ENCODE measurements at regions of chr19 and their contacts with region 1.

Region 1: DNA sequence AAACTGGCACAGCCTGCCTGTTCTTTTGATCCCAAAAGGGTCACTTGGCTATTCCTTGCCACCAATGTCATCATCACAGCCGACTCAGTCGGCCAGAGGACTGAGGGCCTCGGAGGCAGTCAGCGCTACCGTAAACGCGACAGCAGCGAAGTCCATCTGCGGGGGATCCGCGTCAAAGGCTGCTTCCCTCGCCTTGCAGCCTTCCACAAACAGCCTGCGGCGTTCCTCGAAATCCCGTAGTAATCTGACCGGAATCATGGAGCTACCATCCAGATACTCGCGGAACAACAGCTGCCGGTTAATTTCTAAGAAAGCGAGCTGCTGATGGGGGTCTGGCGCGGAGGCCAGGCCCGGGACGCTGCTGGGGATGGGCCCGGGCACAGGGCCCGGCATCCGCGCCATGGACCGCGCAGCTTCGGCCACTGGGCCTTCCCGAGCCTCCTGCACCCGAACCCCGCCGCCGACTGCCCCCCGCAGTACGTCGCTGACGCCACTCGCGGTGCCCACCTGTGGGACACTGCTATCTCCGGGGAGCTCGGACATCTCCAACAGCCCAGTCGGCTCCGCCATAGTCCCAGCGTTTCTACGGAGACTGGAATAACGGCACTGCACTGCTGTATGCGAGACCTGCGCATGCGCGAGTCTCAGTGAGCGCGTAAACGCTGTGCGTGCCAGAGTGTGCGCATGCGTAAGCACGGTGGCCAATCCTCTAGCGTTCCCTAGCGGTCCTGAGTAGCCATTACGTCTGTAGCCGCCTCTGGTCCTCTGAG is at the start of gene EID2B:
- H3K4me3 ChIP-seq: peak within 1 kb of the TSS; percentile 88
- H3K27ac ChIP-seq: peak within 1 kb of the TSS; percentile 85
- H3K4me1 ChIP-seq: peaks cover 20% of the 10 kb centered on the region
- CTCF ChIP-seq: peak; percentile 100

Region 2: GRCh38 chr19:39514840-39515550 is 17.4 kb before region 1 on chr19 and contains the start of gene SELENOV:
- CTCF ChIA-PET with region 1: interaction called, 31 read pairs
- POLR2A ChIA-PET with region 1: interaction called, 12 read pairs
- H3K4me3 ChIP-seq: peak within 1 kb of the TSS; percentile 25
- H3K27ac ChIP-seq: peak within 1 kb of the TSS; percentile 16; the same call in 1 of the 2 replicates
- H3K4me1 ChIP-seq: peaks cover 17% of the 10 kb centered on the region
- CTCF ChIP-seq: peak; percentile 79